B cell (primary cell): ENCODE measurements at regions of chr5 and their contacts with region 1.

Region 1: DNA sequence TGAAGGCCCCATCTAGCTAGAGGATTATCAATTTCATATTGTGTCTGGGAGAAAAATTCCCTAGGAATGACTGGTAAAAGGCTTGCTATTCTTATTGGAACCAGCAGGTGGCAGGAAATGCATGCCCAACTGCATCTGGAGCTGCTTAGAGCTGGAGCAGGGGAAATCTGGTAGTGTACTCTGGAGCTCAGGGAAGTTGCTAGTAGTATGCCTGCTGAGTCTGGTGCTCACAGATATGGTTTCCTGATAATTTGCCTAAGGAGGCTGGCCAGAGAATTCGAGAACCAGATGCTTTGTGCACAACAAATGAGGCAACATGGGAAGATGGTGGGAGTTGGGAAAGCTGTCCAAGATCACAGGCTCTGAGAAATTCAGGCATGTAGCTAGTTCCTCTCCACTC is 53.7 kb downstream of the G3BP1 start:
- DNase-seq: peak; percentile 59
- ATAC-seq: no peak
- H3K4me3 ChIP-seq: no peak overlapping the region
- H3K4me3 Mint-ChIP-seq: no peak overlapping the region
- H3K27ac ChIP-seq: no peak overlapping the region
- H3K27ac Mint-ChIP-seq: no peak overlapping the region
- H3K4me1 ChIP-seq: no peaks in the 10 kb centered on the region
- H3K4me1 Mint-ChIP-seq: no peaks in the 10 kb centered on the region
- H3K27me3 ChIP-seq: no peaks in the 10 kb centered on the region
- H3K27me3 Mint-ChIP-seq: no peaks in the 10 kb centered on the region
- CTCF ChIP-seq: peak; percentile 83

Region 2: GRCh38 chr5:151811593-151812321 is 13.7 kb before region 1 on chr5:
- CTCF ChIA-PET with region 1: interaction called, 37 read pairs
- POLR2A ChIA-PET with region 1: no interaction called
- intact Hi-C with region 1: no loop called
- DNase-seq: no peak
- ATAC-seq: no peak
- H3K4me3 ChIP-seq: no peak overlapping the region
- H3K4me3 Mint-ChIP-seq: no peak overlapping the region
- H3K27ac ChIP-seq: no peak overlapping the region
- H3K27ac Mint-ChIP-seq: no peak overlapping the region
- H3K4me1 ChIP-seq: no peaks in the 10 kb centered on the region
- H3K4me1 Mint-ChIP-seq: no peaks in the 10 kb centered on the region
- H3K27me3 ChIP-seq: no peaks in the 10 kb centered on the region
- H3K27me3 Mint-ChIP-seq: no peaks in the 10 kb centered on the region
- CTCF ChIP-seq: no peak

Region 3: GRCh38 chr5:152349683-152350526 is 524.5 kb after region 1 on chr5:
- CTCF ChIA-PET with region 1: interaction called, 10 read pairs
- POLR2A ChIA-PET with region 1: no interaction called
- intact Hi-C with region 1: loop called (anchors 5 kb)
- DNase-seq: peak; percentile 7
- ATAC-seq: no peak
- H3K4me3 ChIP-seq: no peak overlapping the region
- H3K4me3 Mint-ChIP-seq: no peak overlapping the region
- H3K27ac ChIP-seq: no peak overlapping the region
- H3K27ac Mint-ChIP-seq: no peak overlapping the region
- H3K4me1 ChIP-seq: no peaks in the 10 kb centered on the region
- H3K4me1 Mint-ChIP-seq: no peaks in the 10 kb centered on the region
- H3K27me3 ChIP-seq: peaks cover 0 to 5% (median 0%) of the 10 kb centered on the region in 4 experiments
- H3K27me3 Mint-ChIP-seq: no peaks in the 10 kb centered on the region
- CTCF ChIP-seq: peak; percentile 69

Region 4: GRCh38 chr5:152505442-152506042 is 680.1 kb after region 1 on chr5:
- CTCF ChIA-PET with region 1: interaction called, 14 read pairs
- POLR2A ChIA-PET with region 1: no interaction called
- intact Hi-C with region 1: no loop called
- DNase-seq: peak; percentile 58
- ATAC-seq: peak; percentile 39
- H3K4me3 ChIP-seq: no peak overlapping the region
- H3K4me3 Mint-ChIP-seq: no peak overlapping the region
- H3K27ac ChIP-seq: no peak overlapping the region
- H3K27ac Mint-ChIP-seq: no peak overlapping the region
- H3K4me1 ChIP-seq: no peaks in the 10 kb centered on the region
- H3K4me1 Mint-ChIP-seq: peaks cover 2% of the 10 kb centered on the region
- H3K27me3 ChIP-seq: peaks cover 0 to 3% (median under 1%) of the 10 kb centered on the region in 4 experiments
- H3K27me3 Mint-ChIP-seq: peaks cover 9% of the 10 kb centered on the region
- CTCF ChIP-seq: peak; percentile 66